GM23248 (cell line): ENCODE measurements at regions of chr5 and their contacts with region 1.

Region 1: GRCh38 chr5:113507601-113508000 is 5.9 kb upstream of the YTHDC2 start:
- DNase-seq: no peak
- H3K4me3 ChIP-seq: no peak overlapping the region
- H3K27ac ChIP-seq: no peak overlapping the region
- H3K4me1 ChIP-seq: peaks cover 15% of the 10 kb centered on the region; the same call in 1 of the 2 replicates
- H3K27me3 ChIP-seq: no peaks in the 10 kb centered on the region

Region 2: GRCh38 chr5:113005454-113005853 is 502.1 kb before region 1 on chr5:
- in situ Hi-C with region 1: loop called (anchors 10 kb)
- DNase-seq: peak; percentile 33
- H3K4me3 ChIP-seq: no peak overlapping the region
- H3K27ac ChIP-seq: no peak overlapping the region
- H3K4me1 ChIP-seq: peaks cover 5% of the 10 kb centered on the region; the same call in 1 of the 2 replicates
- H3K27me3 ChIP-seq: no peaks in the 10 kb centered on the region

Region 3: DNA sequence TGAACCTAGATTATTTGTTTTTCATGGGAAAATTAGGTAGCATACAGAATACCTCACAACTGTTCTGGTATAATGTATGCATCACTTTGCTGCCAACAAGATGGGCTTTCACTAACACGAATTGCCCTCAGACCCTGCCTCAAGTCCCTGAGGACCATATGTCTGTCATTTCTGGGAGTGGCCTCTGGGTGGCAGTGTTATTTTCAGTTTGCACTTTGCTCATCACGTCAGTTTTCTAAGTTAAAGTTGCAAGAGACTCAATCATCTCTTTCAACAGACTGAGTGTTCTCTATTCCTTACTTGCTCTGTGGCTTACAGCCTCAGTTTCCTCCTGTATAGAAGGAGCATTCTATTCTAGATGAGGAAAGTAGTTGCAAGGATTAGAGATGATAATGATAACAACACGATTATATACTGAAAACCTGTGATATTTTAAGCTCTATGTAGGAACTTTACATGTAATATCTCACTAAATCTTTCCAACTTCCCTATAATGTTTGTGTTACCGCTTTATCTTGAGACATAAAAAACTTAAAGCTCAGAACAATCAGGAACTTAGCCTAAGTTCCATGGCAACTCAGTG is 128.6 kb before region 1 on chr5:
- in situ Hi-C with region 1: loop called (anchors 10 kb)
- DNase-seq: peak; percentile 66
- H3K4me3 ChIP-seq: no peak overlapping the region
- H3K27ac ChIP-seq: no peak overlapping the region
- H3K4me1 ChIP-seq: peaks cover 19% of the 10 kb centered on the region
- H3K27me3 ChIP-seq: no peaks in the 10 kb centered on the region

Region 4: DNA sequence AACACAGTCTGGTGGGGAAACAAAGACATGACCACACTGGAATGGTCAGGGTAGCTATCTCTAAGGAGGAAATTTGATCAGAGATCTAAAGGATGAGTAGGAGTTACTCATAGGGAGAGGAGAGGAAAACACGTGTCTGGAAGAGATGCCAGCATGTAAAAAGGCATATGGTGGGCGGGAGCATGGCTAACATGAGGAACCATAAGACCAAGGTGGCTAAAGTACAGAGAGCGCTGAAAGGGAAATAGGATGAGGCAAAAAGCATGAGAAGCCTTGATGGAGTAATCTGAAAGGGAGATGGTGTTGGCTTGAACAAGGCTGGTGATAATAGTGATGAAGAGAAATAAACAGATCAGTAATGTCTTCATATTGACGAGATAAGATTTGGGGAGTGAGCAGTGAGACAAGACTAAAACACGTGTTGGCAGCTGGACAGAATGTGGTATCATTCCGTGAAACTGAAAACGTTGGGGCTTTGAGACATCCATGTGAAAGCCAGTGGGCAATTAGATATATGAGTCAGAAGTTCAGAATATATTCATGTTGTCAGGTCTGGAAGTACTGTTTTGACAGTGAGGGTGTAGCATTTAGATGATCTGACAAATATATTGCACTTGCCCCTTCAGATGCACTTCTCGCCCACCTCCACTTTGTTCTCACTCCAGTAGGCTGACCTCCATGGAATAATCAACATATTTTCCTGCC is 645.2 kb after region 1 on chr5:
- in situ Hi-C with region 1: no loop called
- DNase-seq: no peak
- H3K4me3 ChIP-seq: no peak overlapping the region
- H3K27ac ChIP-seq: no peak overlapping the region
- H3K4me1 ChIP-seq: no peaks in the 10 kb centered on the region
- H3K27me3 ChIP-seq: no peaks in the 10 kb centered on the region